ENCODE measurements at regions of chr5 and their contacts with region 1.

Region 1: DNA sequence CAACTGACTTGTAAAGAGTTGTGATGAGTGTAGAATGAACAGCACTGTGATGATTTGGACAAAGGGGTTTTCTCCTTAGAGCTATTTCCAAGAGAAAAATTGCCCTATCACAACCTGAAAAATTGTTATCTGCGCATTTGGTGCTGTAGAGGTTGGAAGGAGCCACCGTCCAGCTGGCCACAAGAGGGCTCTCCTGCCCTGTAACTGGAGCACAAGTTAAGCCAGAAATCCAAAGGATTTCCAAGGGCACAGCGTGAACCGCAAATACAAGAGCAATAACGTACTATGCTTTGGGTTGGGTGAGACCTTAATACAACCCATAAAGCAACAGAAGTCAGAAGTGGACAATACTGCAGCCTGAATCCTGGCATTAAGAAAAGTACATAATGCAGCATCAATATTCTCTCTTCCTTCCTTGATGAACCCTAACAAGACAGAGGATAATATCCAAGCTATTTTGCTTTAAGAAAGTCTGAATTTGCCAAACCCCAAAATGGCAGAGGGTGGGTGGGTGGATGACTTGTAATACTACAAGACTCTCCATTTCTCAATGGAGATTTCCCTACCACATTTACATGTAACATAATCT is 56.8 kb upstream of the SMIM32 start:
- DNase-seq: peak; percentile 70
- ATAC-seq: peak; percentile 98
- H3K4me3 ChIP-seq: no peak overlapping the region
- H3K27ac ChIP-seq: no peak overlapping the region
- H3K4me1 ChIP-seq: no peaks in the 10 kb centered on the region
- H3K27me3 ChIP-seq: peaks cover 2% of the 10 kb centered on the region
- CTCF ChIP-seq: peak; percentile 92
- POLR2A ChIP-seq: no peak
- RAD21 ChIP-seq: peak; percentile 89

Region 2: GRCh38 chr5:136686192-136686872 is 436.6 kb after region 1 on chr5:
- CTCF ChIA-PET with region 1: interaction called, 7 read pairs
- POLR2A ChIA-PET with region 1: no interaction called
- dilution Hi-C with region 1: no loop called
- in situ Hi-C with region 1: no loop called
- intact Hi-C with region 1: loop called (anchors 1 kb)
- DNase-seq: peak; percentile 26
- ATAC-seq: peak; percentile 71
- H3K4me3 ChIP-seq: no peak overlapping the region
- H3K27ac ChIP-seq: no peak overlapping the region
- H3K4me1 ChIP-seq: no peaks in the 10 kb centered on the region
- H3K27me3 ChIP-seq: no peaks in the 10 kb centered on the region
- CTCF ChIP-seq: peak; percentile 47
- POLR2A ChIP-seq: no peak
- RAD21 ChIP-seq: peak; percentile 49

Region 3: DNA sequence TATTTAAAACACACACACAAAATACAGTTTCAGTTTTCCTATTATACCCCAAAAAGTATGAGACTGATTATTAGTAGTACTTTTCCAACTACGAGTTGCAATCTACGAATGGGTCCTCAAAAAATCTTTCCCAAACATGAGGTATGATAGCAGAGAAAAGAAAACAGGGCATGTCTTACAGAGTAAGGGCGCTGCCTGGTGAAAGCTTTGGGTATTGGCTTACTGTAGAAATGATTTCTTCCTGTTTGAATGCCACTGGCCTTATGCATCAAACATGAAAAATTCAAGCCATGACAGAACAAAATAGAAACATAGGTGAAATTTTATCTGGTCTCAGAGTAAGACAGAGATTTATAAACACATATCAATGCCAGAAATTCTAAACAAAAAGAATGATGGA is 801.4 kb after region 1 on chr5:
- CTCF ChIA-PET with region 1: no interaction called
- POLR2A ChIA-PET with region 1: no interaction called
- dilution Hi-C with region 1: no loop called
- in situ Hi-C with region 1: no loop called
- intact Hi-C with region 1: loop called (anchors 5 kb)
- DNase-seq: peak; percentile 11
- ATAC-seq: no peak
- H3K4me3 ChIP-seq: no peak overlapping the region
- H3K27ac ChIP-seq: no peak overlapping the region
- H3K4me1 ChIP-seq: no peaks in the 10 kb centered on the region
- H3K27me3 ChIP-seq: no peaks in the 10 kb centered on the region
- CTCF ChIP-seq: peak; percentile 49
- POLR2A ChIP-seq: no peak
- RAD21 ChIP-seq: peak; percentile 50

Region 4: GRCh38 chr5:137320056-137321045 is 1070.6 kb after region 1 on chr5:
- CTCF ChIA-PET with region 1: no interaction called
- POLR2A ChIA-PET with region 1: no interaction called
- dilution Hi-C with region 1: no loop called
- in situ Hi-C with region 1: no loop called
- intact Hi-C with region 1: loop called (anchors 10 kb)
- DNase-seq: peak; percentile 51
- ATAC-seq: peak; percentile 73; the same call in 1 of the 2 replicates
- H3K4me3 ChIP-seq: no peak overlapping the region
- H3K27ac ChIP-seq: no peak overlapping the region
- H3K4me1 ChIP-seq: no peaks in the 10 kb centered on the region
- H3K27me3 ChIP-seq: peaks cover 8% of the 10 kb centered on the region
- CTCF ChIP-seq: peak; percentile 82
- POLR2A ChIP-seq: no peak
- RAD21 ChIP-seq: peak; percentile 76

Measured in IMR-90 (cell line).